ENCODE measurements at regions of chr6 and their contacts with region 1.

Region 1: GRCh38 chr6:30707281-30707872 is 9.7 kb downstream of the MDC1 start:
- H3K4me3 ChIP-seq: no peak overlapping the region
- H3K27ac ChIP-seq: peak overlapping the region; percentile 91
- H3K4me1 ChIP-seq: peaks cover 17% of the 10 kb centered on the region
- CTCF ChIP-seq: no peak

Region 2: GRCh38 chr6:30678964-30679726 is 28.2 kb before region 1 on chr6:
- CTCF ChIA-PET with region 1: interaction called, 32 read pairs
- POLR2A ChIA-PET with region 1: interaction called, 3 read pairs
- H3K4me3 ChIP-seq: no peak overlapping the region
- H3K27ac ChIP-seq: no peak overlapping the region
- H3K4me1 ChIP-seq: peaks cover 19% of the 10 kb centered on the region
- CTCF ChIP-seq: peak; percentile 90

Region 3: DNA sequence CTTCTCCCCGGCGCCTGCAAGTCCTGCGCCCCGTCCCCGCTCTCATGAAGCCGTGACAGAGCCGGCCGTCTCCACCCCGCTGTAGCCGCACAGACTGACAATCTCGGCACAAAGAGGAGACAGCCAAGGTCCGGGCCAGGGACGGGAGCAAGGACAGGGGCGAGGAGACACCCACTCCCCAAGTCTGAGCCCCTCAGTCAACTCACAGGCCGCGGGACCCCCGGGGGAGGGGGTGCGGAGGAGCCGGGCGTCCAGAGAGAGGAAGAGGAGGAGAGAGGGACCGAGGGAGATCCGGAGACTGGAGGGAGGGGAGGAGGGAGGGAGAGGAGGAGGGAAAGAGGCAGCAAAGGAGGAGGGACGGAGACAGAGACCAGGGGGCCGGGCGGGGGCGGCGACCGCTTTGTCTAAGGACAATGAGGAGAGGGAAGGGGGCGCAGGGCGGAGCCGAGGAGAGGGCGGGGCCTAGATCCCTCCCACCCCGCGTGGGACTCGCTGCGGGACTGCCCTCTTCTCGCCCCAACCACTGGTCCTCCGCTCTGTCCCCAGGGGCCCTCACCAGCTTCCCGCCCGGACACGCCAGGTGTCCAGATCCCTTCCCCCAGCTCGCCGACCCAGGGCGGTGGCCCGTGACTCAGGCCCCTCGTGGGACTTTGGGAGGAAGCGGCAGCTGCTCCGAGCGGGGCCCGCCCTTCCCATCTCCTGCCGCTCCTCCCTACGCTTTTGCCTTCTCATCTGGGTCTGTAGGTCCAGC is 20.3 kb before region 1 on chr6:
- CTCF ChIA-PET with region 1: interaction called, 32 read pairs
- POLR2A ChIA-PET with region 1: interaction called, 30 read pairs
- H3K4me3 ChIP-seq: peak overlapping the region; percentile 52
- H3K27ac ChIP-seq: peak overlapping the region; percentile 94
- H3K4me1 ChIP-seq: peaks cover 31% of the 10 kb centered on the region
- CTCF ChIP-seq: peak; percentile 4; the same call in 1 of the 2 replicates

Region 4: GRCh38 chr6:30769853-30770563 is 62.6 kb after region 1 on chr6:
- CTCF ChIA-PET with region 1: no interaction called
- POLR2A ChIA-PET with region 1: no interaction called
- H3K4me3 ChIP-seq: no peak overlapping the region
- H3K27ac ChIP-seq: peak overlapping the region; percentile 72; the same call in 1 of the 2 replicates
- H3K4me1 ChIP-seq: peaks cover 17% of the 10 kb centered on the region
- CTCF ChIP-seq: no peak

Measured in HEK293 (cell line).